Activated CD4-positive, alpha-beta memory T cell treated with anti-CD3 and anti-CD28 coated beads for 36 hours (primary cell): ENCODE measurements at regions of chr4 and their contacts with region 1.

Region 1: GRCh38 chr4:96827086-96827485 is 987.2 kb downstream of the PDHA2 start:
- DNase-seq: no peak
- H3K4me3 Mint-ChIP-seq: no peak overlapping the region
- H3K27ac Mint-ChIP-seq: no peak overlapping the region
- H3K4me1 Mint-ChIP-seq: no peaks in the 10 kb centered on the region
- H3K27me3 Mint-ChIP-seq: no peaks in the 10 kb centered on the region

Region 2: GRCh38 chr4:96784361-96785005 is 42.6 kb before region 1 on chr4:
- CTCF ChIA-PET with region 1: no interaction called
- POLR2A ChIA-PET with region 1: no interaction called
- intact Hi-C with region 1: loop called (anchors 1 kb)
- DNase-seq: no peak
- H3K4me3 Mint-ChIP-seq: no peak overlapping the region
- H3K27ac Mint-ChIP-seq: no peak overlapping the region
- H3K4me1 Mint-ChIP-seq: no peaks in the 10 kb centered on the region
- H3K27me3 Mint-ChIP-seq: no peaks in the 10 kb centered on the region

Region 3: DNA sequence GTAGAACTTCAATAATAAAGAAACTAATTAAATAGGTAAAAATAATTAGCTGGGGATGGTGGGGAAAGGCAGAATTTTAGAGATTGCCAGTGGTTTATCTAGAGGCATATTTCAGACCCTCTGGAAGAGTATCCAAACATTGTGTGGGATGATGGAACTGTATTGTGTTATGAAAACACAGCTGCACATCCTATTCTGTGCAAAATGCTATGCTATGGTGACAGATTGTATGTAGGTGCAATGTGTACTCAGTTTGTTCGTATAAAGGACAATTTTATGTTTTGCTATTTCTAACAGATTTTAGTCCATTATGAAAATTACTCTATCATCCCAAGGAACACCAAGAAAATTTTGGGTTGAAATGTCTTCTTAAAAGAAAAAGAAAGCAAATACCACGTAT is 67.5 kb after region 1 on chr4:
- CTCF ChIA-PET with region 1: no interaction called
- POLR2A ChIA-PET with region 1: no interaction called
- intact Hi-C with region 1: no loop called
- DNase-seq: no peak
- H3K4me3 Mint-ChIP-seq: no peak overlapping the region
- H3K27ac Mint-ChIP-seq: no peak overlapping the region
- H3K4me1 Mint-ChIP-seq: no peaks in the 10 kb centered on the region
- H3K27me3 Mint-ChIP-seq: no peaks in the 10 kb centered on the region